Tibial artery (tissue), 4 donors: ENCODE measurements at regions of chr3 and their contacts with region 1.

Region 1: GRCh38 chr3:97340940-97341339 is 423.6 kb upstream of the ARL6 start:
- DNase-seq: no peak
- H3K4me3 ChIP-seq: no peak overlapping the region
- H3K27ac ChIP-seq: no peak overlapping the region
- H3K4me1 ChIP-seq: no peaks in the 10 kb centered on the region
- H3K27me3 ChIP-seq: no peaks in the 10 kb centered on the region
- CTCF ChIP-seq: no peak

Region 2: GRCh38 chr3:95939235-95939809 is 1401.6 kb before region 1 on chr3:
- intact Hi-C with region 1: loop called (anchors 10 kb)
- DNase-seq: no peak
- H3K4me3 ChIP-seq: no peak overlapping the region
- H3K27ac ChIP-seq: no peak overlapping the region
- H3K4me1 ChIP-seq: no peaks in the 10 kb centered on the region
- H3K27me3 ChIP-seq: no peaks in the 10 kb centered on the region
- CTCF ChIP-seq: no peak

Region 3: GRCh38 chr3:97232393-97233013 is 108.4 kb before region 1 on chr3:
- intact Hi-C with region 1: no loop called
- DNase-seq: no peak
- H3K4me3 ChIP-seq: no peak overlapping the region
- H3K27ac ChIP-seq: no peak overlapping the region
- H3K4me1 ChIP-seq: peaks cover 0 to 3% (median 0%) of the 10 kb centered on the region in 4 donors
- H3K27me3 ChIP-seq: no peaks in the 10 kb centered on the region
- CTCF ChIP-seq: no peak